HepG2 (cell line): ENCODE measurements at regions of chr5 and their contacts with region 1.

Region 1: GRCh38 chr5:177086924-177087706 is 400 bp downstream of the FGFR4 start:
- DNase-seq: peak; percentile 96
- ATAC-seq: peak; percentile 89
- H3K4me3 ChIP-seq: peak overlapping the region; percentile 91 to 99 (median 93)
- H3K27ac ChIP-seq: peak overlapping the region; percentile 100
- H3K4me1 ChIP-seq: peaks cover 68% of the 10 kb centered on the region
- H3K27me3 ChIP-seq: no peaks in the 10 kb centered on the region; a peak in 1 of 5 replicates
- CTCF ChIP-seq: peak; percentile 95
- EP300 ChIP-seq: peak; percentile 83 to 90; a peak in 2 of 4 replicates
- POLR2A ChIP-seq: peak in 1 of 2 experiments; percentile 89; a peak in 2 of 4 replicates
- RAD21 ChIP-seq: peak; percentile 94

Region 2: GRCh38 chr5:176537608-176538504 is 549.3 kb before region 1 on chr5:
- CTCF ChIA-PET with region 1: no interaction called
- POLR2A ChIA-PET with region 1: interaction called, 19 read pairs
- in situ Hi-C with region 1: no loop called
- intact Hi-C with region 1: no loop called
- DNase-seq: peak; percentile 98
- ATAC-seq: peak; percentile 67
- H3K4me3 ChIP-seq: peak overlapping the region; percentile 90 to 98 (median 97)
- H3K27ac ChIP-seq: peak overlapping the region; percentile 95
- H3K4me1 ChIP-seq: peaks cover 69% of the 10 kb centered on the region
- H3K27me3 ChIP-seq: no peaks in the 10 kb centered on the region; a peak in 1 of 5 replicates
- CTCF ChIP-seq: no peak
- EP300 ChIP-seq: 0 out of 4 replicates have a peak, but pooled peaks of 1 of the 2 experiments have one; percentile 20
- POLR2A ChIP-seq: peak in 1 of 2 experiments; percentile 74; a peak in 2 of 4 replicates
- RAD21 ChIP-seq: 0 out of 2 replicates have a peak, but pooled peaks have one; percentile 6

Region 3: GRCh38 chr5:177022384-177023308 is 64.5 kb before region 1 on chr5 and contains the start of gene ZNF346:
- CTCF ChIA-PET with region 1: no interaction called
- POLR2A ChIA-PET with region 1: interaction called, 16 read pairs
- in situ Hi-C with region 1: no loop called
- intact Hi-C with region 1: loop called (anchors 2 kb)
- DNase-seq: peak; percentile 90
- ATAC-seq: peak; percentile 94
- H3K4me3 ChIP-seq: peak within 1 kb of the TSS; percentile 60 to 93 (median 91)
- H3K27ac ChIP-seq: peak within 1 kb of the TSS; percentile 82
- H3K4me1 ChIP-seq: peaks cover 32% of the 10 kb centered on the region
- H3K27me3 ChIP-seq: no peaks in the 10 kb centered on the region; a peak in 1 of 5 replicates
- CTCF ChIP-seq: peak; percentile 71
- EP300 ChIP-seq: no peak
- POLR2A ChIP-seq: peak; percentile 81 to 85
- RAD21 ChIP-seq: peak; percentile 60
- total RNA-seq, gene ZNF346: 19.4 and 20.1 TPM in 2 replicates

Region 4: GRCh38 chr5:177049285-177049684 is 37.8 kb before region 1 on chr5:
- CTCF ChIA-PET with region 1: no interaction called
- POLR2A ChIA-PET with region 1: no interaction called
- in situ Hi-C with region 1: no loop called
- intact Hi-C with region 1: no loop called
- DNase-seq: no peak
- ATAC-seq: no peak
- H3K4me3 ChIP-seq: no peak overlapping the region
- H3K27ac ChIP-seq: no peak overlapping the region
- H3K4me1 ChIP-seq: no peaks in the 10 kb centered on the region
- H3K27me3 ChIP-seq: no peaks in the 10 kb centered on the region
- CTCF ChIP-seq: no peak
- EP300 ChIP-seq: no peak
- POLR2A ChIP-seq: no peak
- RAD21 ChIP-seq: no peak

Region 5: GRCh38 chr5:177103523-177104253 is 16.6 kb after region 1 on chr5:
- CTCF ChIA-PET with region 1: no interaction called
- POLR2A ChIA-PET with region 1: interaction called, 293 read pairs
- in situ Hi-C with region 1: no loop called
- intact Hi-C with region 1: loop called (anchors 2 kb)
- DNase-seq: no peak
- ATAC-seq: peak; percentile 32
- H3K4me3 ChIP-seq: no peak overlapping the region
- H3K27ac ChIP-seq: no peak overlapping the region
- H3K4me1 ChIP-seq: peaks cover 89% of the 10 kb centered on the region
- H3K27me3 ChIP-seq: no peaks in the 10 kb centered on the region
- CTCF ChIP-seq: no peak
- EP300 ChIP-seq: no peak
- POLR2A ChIP-seq: peak in 1 of 2 experiments; percentile 24; a peak in 1 of 4 replicates
- RAD21 ChIP-seq: no peak

Region 6: DNA sequence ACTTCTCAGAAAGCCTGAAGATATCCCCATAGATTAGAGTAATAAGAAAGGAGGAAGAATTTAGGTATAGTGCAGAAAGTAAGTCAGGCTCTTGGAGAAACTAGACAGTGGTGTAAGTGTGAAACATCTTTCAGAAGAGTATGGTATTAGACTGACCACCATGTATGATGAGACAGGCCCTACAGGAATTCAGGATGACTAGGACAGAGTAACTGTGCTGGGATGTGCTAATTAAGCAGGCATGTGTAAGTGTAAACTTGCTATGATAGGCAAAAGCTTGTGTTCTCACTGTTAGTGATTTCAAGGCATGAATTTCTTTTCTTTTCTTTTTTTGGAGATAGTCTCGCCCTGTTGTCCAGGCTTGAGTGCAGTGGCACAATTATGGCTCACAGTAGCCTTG is 145.6 kb after region 1 on chr5:
- CTCF ChIA-PET with region 1: no interaction called
- POLR2A ChIA-PET with region 1: no interaction called
- in situ Hi-C with region 1: no loop called
- intact Hi-C with region 1: no loop called
- DNase-seq: no peak
- ATAC-seq: no peak
- H3K4me3 ChIP-seq: no peak overlapping the region
- H3K27ac ChIP-seq: no peak overlapping the region
- H3K4me1 ChIP-seq: no peaks in the 10 kb centered on the region
- H3K27me3 ChIP-seq: peaks cover 0 to 12% of the 10 kb centered on the region in 2 experiments; a peak in 1 of 5 replicates
- CTCF ChIP-seq: no peak
- EP300 ChIP-seq: no peak
- POLR2A ChIP-seq: no peak
- RAD21 ChIP-seq: no peak

Region 7: GRCh38 chr5:177362610-177363507 is 275.7 kb after region 1 on chr5:
- CTCF ChIA-PET with region 1: no interaction called
- POLR2A ChIA-PET with region 1: interaction called, 10 read pairs
- in situ Hi-C with region 1: no loop called
- intact Hi-C with region 1: no loop called
- DNase-seq: no peak
- ATAC-seq: peak; percentile 24
- H3K4me3 ChIP-seq: peak overlapping the region; percentile 57 to 81 (median 60)
- H3K27ac ChIP-seq: no peak overlapping the region
- H3K4me1 ChIP-seq: peaks cover 95% of the 10 kb centered on the region
- H3K27me3 ChIP-seq: peaks cover 0 to 23% of the 10 kb centered on the region in 2 experiments; a peak in 4 of 5 replicates
- CTCF ChIP-seq: peak; percentile 14; the same call in 1 of the 2 replicates
- EP300 ChIP-seq: no peak
- POLR2A ChIP-seq: no peak
- RAD21 ChIP-seq: no peak